ENCODE measurements at regions of chr5 and their contacts with region 1.

Region 1: DNA sequence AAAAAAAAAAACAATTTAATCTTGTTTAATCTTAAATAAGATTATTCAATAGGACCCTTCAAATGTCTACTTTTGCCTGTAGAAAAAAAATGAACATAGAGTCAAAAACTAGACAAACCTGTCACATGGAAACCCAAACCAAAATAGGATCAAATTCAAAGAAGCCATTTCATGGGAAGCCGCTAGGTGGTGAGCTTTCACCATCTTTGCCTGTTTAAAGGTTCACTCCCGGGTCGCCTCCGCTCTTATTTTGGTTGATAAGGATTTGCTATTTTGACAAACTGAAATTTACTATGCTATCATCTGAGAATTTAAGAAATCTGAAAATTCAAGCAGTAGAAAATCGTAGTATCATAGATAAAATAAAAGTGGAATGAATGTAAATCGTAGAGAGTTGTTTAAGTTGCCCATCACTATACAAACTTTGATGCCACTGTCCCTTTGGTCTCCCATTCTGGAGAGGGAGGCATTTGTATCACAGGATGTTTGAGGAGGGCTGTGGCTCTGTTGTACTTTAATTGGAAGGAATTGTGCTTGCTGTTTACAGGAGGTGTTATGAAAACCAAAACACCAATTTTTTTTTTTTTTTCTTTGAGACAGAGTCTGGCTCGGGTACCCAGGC is 43.5 kb upstream of the DNAH5 start:
- DNase-seq: peak; percentile 71 to 74
- ATAC-seq: peak in 1 of 2 experiments; percentile 68; a peak in 3 of 6 replicates
- H3K4me3 ChIP-seq: no peak overlapping the region
- H3K27ac ChIP-seq: peak overlapping the region; percentile 56 to 61; a peak in 4 of 6 replicates
- H3K4me1 ChIP-seq: peaks cover 18% of the 10 kb centered on the region
- CTCF ChIP-seq: peak; percentile 97
- EP300 ChIP-seq: no peak
- POLR2A ChIP-seq: no peak
- RAD21 ChIP-seq: peak; percentile 97

Region 2: DNA sequence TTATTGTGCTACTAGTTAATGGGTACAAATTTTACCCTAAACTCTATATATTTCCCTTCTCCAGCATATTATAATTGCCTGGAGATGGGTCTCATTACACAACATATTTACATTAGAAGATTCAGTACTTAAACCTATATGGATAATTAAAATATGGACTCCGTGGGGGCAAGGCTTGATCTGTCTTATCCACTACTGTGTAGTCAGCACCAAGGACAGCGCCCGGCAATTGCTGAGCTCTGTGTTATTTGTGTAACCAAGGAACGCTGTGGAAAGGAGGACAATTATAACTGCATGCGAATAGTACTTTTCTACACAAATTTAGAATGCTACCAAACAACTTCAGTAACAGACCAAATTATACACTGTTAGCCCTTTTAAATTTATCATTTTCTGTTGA is 121.2 kb before region 1 on chr5:
- CTCF ChIA-PET with region 1: no interaction called
- POLR2A ChIA-PET with region 1: no interaction called
- DNase-seq: peak; percentile 8 to 33
- ATAC-seq: peak; percentile 58 to 64; a peak in 3 of 6 replicates
- H3K4me3 ChIP-seq: no peak overlapping the region
- H3K27ac ChIP-seq: no peak overlapping the region
- H3K4me1 ChIP-seq: no peaks in the 10 kb centered on the region
- CTCF ChIP-seq: no peak
- EP300 ChIP-seq: no peak
- POLR2A ChIP-seq: no peak
- RAD21 ChIP-seq: no peak

Region 3: DNA sequence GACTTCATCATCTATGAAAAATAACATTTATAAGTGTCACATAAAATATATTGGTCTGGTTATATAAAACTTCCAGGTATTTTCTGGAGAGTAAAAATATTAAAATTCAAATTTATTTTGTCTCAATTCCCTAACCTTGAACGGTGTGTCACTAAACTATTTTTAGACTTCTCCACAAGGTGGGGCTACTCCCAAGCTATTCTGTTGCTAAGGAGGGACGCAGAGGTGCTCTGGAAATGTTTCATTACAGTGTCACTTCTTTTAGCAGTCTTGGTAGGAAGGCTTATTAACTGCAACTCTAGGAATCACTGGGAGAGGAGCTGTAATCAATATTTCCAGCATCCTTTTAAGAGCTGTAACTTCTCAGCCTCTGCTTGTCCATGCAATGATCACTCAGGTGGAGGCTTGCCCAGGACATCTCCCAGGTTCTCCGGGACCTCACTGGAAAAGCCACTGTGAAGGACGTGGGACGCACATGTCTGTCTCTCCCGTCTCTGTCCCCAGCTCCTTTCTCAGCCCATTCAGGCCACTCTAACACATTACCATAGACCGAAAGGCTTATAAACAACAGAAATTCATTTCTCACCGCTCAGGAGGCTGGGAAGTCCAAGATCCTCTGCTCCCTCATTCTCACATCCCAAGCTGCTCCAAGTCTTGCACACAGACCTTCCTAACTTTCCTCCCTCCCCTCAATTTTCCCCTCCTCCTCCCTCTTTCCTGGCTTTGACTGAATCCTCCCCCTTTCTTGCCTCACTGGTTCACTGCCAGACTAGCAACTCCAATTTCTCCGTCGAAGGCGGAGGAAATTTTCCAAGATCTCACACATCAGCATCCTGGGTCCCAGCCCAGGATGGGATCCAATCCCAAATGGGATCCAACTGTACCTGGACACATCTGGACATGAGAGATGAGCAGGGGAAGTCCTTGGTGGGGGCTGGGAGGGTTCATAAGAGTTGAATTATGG is 10.8 kb before region 1 on chr5:
- CTCF ChIA-PET with region 1: interaction called, 12 read pairs
- POLR2A ChIA-PET with region 1: no interaction called
- DNase-seq: peak; percentile 49 to 79
- ATAC-seq: peak; percentile 87 to 96
- H3K4me3 ChIP-seq: no peak overlapping the region
- H3K27ac ChIP-seq: no peak overlapping the region; a peak in 1 of 6 replicates
- H3K4me1 ChIP-seq: 0 out of 3 replicates have a peak, but pooled peaks cover 3% of the 10 kb centered on the region
- CTCF ChIP-seq: peak; percentile 81
- EP300 ChIP-seq: no peak
- POLR2A ChIP-seq: no peak
- RAD21 ChIP-seq: peak; percentile 84 to 94

Region 4: GRCh38 chr5:14234219-14234618 is 246.3 kb after region 1 on chr5:
- CTCF ChIA-PET with region 1: no interaction called
- POLR2A ChIA-PET with region 1: no interaction called
- DNase-seq: peak in 1 of 2 experiments; percentile 34
- ATAC-seq: peak; percentile 14 to 68; a peak in 3 of 6 replicates
- H3K4me3 ChIP-seq: no peak overlapping the region
- H3K27ac ChIP-seq: peak overlapping the region in 1 of 2 experiments; percentile 68; a peak in 3 of 6 replicates
- H3K4me1 ChIP-seq: peaks cover 62% of the 10 kb centered on the region
- CTCF ChIP-seq: no peak
- EP300 ChIP-seq: no peak
- POLR2A ChIP-seq: no peak
- RAD21 ChIP-seq: no peak

Region 5: DNA sequence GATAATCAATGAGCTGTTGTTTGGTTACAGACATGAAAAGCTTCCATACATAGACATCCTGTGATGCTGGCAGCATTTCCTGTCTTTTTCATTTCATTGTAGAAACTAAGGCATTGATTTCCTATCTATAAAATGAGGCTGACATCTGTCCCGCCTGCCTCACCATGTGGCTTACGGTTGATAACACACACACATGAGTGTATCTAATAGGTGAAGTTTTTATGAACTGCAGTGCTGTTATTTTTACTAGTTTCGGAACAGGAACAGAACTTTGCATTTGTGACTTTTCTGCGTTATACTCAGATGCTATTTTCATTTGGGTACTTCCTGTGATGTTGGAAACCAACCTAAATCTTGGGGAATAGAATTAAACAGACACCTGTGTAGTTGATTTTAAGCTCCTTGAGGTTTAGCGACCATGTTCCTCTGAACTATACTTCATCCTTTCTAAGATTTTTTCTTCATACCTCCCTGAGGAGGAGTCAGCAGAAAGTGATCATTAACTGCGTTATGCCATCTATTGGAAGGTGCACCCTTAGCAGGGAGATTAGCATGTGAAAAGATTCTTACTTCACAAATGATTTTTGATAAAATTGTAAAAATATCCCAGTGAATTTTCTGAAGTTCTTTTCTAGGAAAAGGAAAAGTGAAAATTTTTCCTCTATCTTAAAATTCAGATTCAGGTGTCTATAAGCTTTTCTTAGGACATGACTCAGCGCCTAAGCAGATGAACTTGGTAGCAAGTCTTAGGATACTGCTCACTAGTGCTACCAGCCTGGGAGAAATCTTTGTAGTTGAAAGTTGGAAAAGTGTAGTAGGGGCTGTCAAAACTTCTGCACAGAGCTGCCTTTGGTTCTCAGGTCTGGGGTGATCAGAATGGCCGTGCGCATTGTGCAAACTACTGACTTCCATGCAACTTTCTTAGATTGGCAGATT is 289.7 kb after region 1 on chr5:
- CTCF ChIA-PET with region 1: interaction called, 10 read pairs
- POLR2A ChIA-PET with region 1: no interaction called
- DNase-seq: no peak
- ATAC-seq: peak in 1 of 2 experiments; percentile 68; a peak in 2 of 6 replicates
- H3K4me3 ChIP-seq: no peak overlapping the region
- H3K27ac ChIP-seq: peak overlapping the region; percentile 10 to 63; a peak in 4 of 6 replicates
- H3K4me1 ChIP-seq: peaks cover 23% of the 10 kb centered on the region
- CTCF ChIP-seq: 0 out of 3 replicates have a peak, but pooled peaks have one; percentile 19
- EP300 ChIP-seq: no peak
- POLR2A ChIP-seq: no peak
- RAD21 ChIP-seq: peak; percentile 19 to 27; a peak in 1 of 5 replicates

Measured in A549 (cell line).